AG04450 (cell line): ENCODE measurements at regions of chr9 and their contacts with region 1.

Region 1: DNA sequence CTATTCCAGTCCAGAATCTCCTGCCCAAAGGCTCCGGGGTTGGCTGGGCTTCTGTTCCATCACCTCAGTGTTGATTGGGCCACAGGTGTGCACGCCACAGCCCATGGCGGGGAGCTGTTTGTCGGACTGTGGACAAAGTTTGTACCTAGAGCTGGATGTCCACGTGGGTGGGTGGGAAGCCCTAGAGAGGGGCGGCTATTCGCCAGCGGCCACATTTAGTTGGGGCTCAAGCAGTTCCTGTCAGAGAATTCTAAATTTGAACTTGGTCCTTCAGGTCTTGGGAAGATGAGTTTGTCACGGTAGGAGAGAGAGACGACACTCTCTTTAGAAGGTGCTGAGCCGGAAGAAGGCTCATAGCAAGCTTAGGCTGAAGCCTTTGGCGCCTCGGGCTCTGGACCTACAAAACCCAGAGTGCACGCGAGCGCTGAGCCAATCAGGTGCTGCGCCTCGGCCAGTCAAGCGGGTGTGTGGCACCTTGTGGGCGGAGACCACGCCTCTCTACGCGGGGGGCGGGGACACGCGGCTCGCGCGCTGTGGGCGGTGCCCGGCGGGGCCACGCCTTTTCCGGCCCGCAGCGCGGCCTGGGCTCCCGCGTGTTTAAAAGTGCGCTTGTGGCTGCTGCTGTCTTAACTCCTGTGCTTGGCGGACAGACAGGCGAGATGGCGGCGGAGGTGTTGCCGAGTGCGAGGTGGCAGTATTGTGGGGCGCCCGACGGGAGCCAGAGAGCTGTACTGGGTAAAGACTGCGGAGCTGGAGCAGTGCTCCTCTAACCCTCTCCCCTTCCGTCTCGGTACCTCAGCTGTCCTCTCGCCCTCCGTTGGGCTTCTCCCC is at the start of gene POLR1E:
- DNase-seq: peak; percentile 76
- H3K4me3 ChIP-seq: peak within 1 kb of the TSS; percentile 95
- H3K27ac ChIP-seq: peak within 1 kb of the TSS; percentile 97
- H3K27me3 ChIP-seq: peaks cover 2% of the 10 kb centered on the region
- CTCF ChIP-seq: no peak
- polyA plus RNA-seq, gene POLR1E: 42.2 and 44.5 TPM in 2 replicates

Region 2: GRCh38 chr9:37283730-37284325 is 201.8 kb before region 1 on chr9:
- CTCF ChIA-PET with region 1: no interaction called
- POLR2A ChIA-PET with region 1: no interaction called
- DNase-seq: no peak
- H3K4me3 ChIP-seq: no peak overlapping the region
- H3K27ac ChIP-seq: peak overlapping the region; percentile 76
- H3K27me3 ChIP-seq: no peaks in the 10 kb centered on the region
- CTCF ChIP-seq: no peak

Region 3: DNA sequence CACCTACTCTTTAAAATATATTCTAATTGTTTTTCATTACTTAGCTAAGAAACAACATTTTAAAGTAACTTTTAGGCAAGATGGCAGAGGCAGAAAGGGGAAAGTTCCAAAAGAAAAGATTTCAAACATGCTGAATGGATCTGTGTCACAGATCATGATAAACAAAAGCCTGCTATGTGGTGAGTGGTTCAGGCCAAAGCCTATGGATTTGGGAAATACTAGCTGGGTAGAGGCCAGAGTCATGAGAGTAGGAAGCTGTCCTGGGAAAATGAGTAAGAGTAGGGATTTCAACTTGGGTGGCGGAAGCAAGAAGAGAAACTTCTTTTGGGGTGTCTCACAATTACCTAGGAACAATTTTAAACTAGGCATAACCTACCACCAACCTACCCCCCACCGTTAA is 131.8 kb before region 1 on chr9:
- CTCF ChIA-PET with region 1: interaction called, 12 read pairs
- POLR2A ChIA-PET with region 1: no interaction called
- DNase-seq: no peak
- H3K4me3 ChIP-seq: no peak overlapping the region
- H3K27ac ChIP-seq: no peak overlapping the region
- H3K27me3 ChIP-seq: no peaks in the 10 kb centered on the region
- CTCF ChIP-seq: no peak

Region 4: GRCh38 chr9:37465249-37466036 is 20.2 kb before region 1 on chr9 and contains the start of gene ZBTB5:
- CTCF ChIA-PET with region 1: no interaction called
- POLR2A ChIA-PET with region 1: interaction called, 11 read pairs
- DNase-seq: peak; percentile 100
- H3K4me3 ChIP-seq: peak within 1 kb of the TSS; percentile 98
- H3K27ac ChIP-seq: peak within 1 kb of the TSS; percentile 98
- H3K27me3 ChIP-seq: no peaks in the 10 kb centered on the region
- CTCF ChIP-seq: no peak
- polyA plus RNA-seq, gene ZBTB5: 9.5 and 10.9 TPM in 2 replicates